ENCODE measurements at regions of chr16 and their contacts with region 1.

Region 1: GRCh38 chr16:649624-650023 is 459 bp downstream of the WDR90 start:
- DNase-seq: no peak
- H3K4me3 ChIP-seq: peak overlapping the region; percentile 73 to 99 (median 90)
- H3K27ac ChIP-seq: peak overlapping the region; percentile 88 to 95 (median 90)
- H3K4me1 ChIP-seq: peaks cover 52 to 64% (median 62%) of the 10 kb centered on the region in 4 donors
- H3K27me3 ChIP-seq: no peaks in the 10 kb centered on the region
- CTCF ChIP-seq: no peak
- EP300 ChIP-seq: no peak
- POLR2A ChIP-seq: no peak

Region 2: DNA sequence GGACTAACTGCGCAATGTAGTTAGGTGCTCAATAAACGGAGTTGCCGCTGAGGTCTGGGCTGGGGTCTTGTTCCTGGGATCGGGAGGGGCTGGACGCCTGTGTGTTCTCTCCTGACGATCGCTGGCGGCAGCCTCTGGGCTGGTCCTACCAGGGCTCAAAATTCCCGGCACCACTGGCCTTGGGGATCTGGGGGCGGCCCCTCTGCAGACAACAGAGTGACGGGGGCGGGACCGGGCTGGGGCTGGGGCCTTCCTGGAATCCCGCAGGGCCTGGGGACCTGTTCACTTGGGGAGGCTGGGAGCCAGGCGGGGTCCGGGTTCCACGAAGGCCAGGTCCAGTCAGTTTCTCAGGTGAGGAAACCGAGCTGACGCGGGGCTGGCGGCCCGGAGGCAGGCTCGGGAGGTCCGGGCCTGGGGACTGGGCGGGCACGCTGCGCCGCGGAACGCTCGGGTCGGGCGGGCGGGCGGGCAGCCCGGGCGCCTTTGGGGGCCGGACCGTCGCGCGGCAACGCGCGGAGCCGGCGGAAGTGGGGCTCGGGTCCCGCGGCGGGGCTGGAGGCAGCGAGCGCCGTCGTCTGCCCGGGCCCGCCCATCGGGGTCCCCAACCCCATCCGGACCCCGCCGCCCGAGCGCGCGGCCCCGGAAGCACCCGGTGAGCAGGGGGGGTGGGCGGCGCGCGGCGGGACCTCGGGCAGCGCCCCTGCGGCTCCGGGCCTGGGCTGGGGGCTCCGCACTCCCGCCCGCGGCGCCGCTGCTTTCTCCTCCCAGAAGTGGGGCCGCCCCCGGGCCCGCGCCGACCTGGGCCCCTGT is 80.0 kb before region 1 on chr16 and contains the start of gene PIGQ:
- intact Hi-C with region 1: loop called (anchors 10 kb)
- DNase-seq: peak; percentile 64 to 85
- H3K4me3 ChIP-seq: peak within 1 kb of the TSS; percentile 91 to 99 (median 94)
- H3K27ac ChIP-seq: peak within 1 kb of the TSS; percentile 66 to 84 (median 82)
- H3K4me1 ChIP-seq: peaks cover 44 to 79% (median 57%) of the 10 kb centered on the region in 4 donors
- H3K27me3 ChIP-seq: peaks cover 0 to 1% (median 0%) of the 10 kb centered on the region in 3 donors
- CTCF ChIP-seq: no peak
- EP300 ChIP-seq: no peak
- POLR2A ChIP-seq: no peak
- total RNA-seq, gene PIGQ: 14.3 to 217 (median 52.6) TPM